ENCODE measurements at regions of chr5 and their contacts with region 1.

Region 1: GRCh38 chr5:132829742-132830435 is 558 bp downstream of the SHROOM1 start:
- DNase-seq: peak; percentile 81
- ATAC-seq: peak; percentile 88
- H3K4me3 Mint-ChIP-seq: peak overlapping the region; percentile 81
- H3K27ac Mint-ChIP-seq: peak overlapping the region; percentile 72
- H3K4me1 Mint-ChIP-seq: peaks cover 24% of the 10 kb centered on the region
- H3K27me3 Mint-ChIP-seq: peaks cover 31% of the 10 kb centered on the region

Region 2: GRCh38 chr5:132866342-132867045 is 36.6 kb after region 1 on chr5 and contains the starts of genes GDF9 and UQCRQ:
- CTCF ChIA-PET with region 1: interaction called, 25 read pairs
- POLR2A ChIA-PET with region 1: interaction called, 7 read pairs
- DNase-seq: peak; percentile 97
- ATAC-seq: peak; percentile 99
- H3K4me3 Mint-ChIP-seq: peak within 1 kb of the TSS; percentile 98
- H3K27ac Mint-ChIP-seq: peak within 1 kb of the TSS; percentile 99
- H3K4me1 Mint-ChIP-seq: peaks cover 23% of the 10 kb centered on the region
- H3K27me3 Mint-ChIP-seq: peaks cover 3% of the 10 kb centered on the region
- total RNA-seq, gene GDF9: 0.52 to 0.92 TPM
- total RNA-seq, gene UQCRQ: 381 to 396 TPM

Region 3: DNA sequence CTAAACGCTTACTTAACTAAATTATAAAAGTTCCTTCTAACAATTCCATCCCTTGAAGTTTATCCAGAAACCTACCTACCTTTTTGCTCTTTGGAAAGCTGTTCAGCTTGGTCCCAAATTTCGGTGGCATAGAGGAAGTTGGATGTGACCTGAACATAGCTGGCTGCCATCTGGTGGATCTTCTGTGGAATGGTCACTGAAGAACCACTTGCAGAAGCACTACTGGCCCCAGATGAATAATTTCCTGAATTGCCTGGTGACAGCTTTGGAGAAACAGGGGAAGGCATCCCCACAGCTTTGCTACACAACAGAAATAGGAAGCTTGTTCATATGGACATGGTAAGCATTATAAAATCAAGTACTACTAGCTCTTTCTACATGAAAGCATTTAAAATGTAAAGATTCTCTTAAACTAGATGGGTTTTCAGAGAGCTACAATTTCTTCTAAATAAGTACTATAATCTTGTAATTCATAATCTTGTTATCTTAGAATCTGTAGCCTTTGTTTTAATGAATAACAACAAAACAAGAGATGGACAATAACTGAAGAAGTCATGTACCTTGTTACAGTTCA is 53.5 kb after region 1 on chr5:
- CTCF ChIA-PET with region 1: interaction called, 35 read pairs
- POLR2A ChIA-PET with region 1: interaction called, 3 read pairs
- DNase-seq: peak; percentile 48
- ATAC-seq: peak; percentile 67
- H3K4me3 Mint-ChIP-seq: no peak overlapping the region
- H3K27ac Mint-ChIP-seq: no peak overlapping the region
- H3K4me1 Mint-ChIP-seq: no peaks in the 10 kb centered on the region
- H3K27me3 Mint-ChIP-seq: no peaks in the 10 kb centered on the region

Region 4: DNA sequence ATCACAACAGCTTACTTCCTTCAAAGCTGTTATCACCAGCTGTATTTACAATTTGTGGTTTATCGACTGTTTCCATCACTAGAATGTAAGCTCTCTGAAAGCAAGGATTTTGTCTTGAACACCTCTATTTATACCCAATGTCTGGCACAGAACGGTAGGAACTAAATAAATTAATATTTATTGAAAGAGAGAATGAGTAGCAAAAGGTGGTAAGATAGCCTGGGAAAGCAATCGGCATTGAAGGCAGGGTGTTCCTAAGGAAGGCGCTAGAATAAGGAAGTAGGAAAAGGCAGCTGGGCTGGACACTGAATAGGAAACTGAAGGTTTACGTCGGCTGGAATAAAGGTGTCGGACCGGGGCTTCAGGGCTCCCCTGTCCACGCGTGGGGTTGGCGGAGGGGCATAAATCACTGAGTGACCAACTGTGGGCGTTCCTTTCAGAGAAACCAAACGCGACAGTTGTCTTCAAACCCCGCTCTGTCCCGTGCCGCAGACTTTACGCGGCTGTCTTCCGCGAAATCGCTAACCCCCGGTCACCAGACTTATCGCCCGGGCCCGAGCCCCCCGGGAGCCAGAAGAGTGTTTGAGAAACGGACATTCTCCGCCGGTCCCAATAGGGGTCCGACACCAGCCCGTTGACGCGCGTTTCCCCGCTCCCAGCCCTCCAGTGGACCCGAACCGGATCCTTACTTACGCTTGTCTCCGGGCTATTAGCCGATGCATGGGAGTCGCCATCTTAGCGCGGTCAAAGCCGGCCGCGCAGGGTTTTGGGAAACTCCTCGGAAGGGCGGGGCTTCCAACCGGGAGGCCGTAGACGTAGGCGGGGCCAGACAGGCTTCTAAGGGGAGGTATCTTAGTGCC is 196.1 kb after region 1 on chr5 and contains the start of gene ZCCHC10:
- CTCF ChIA-PET with region 1: no interaction called
- POLR2A ChIA-PET with region 1: no interaction called
- DNase-seq: peak; percentile 94
- ATAC-seq: peak; percentile 99
- H3K4me3 Mint-ChIP-seq: peak within 1 kb of the TSS; percentile 88
- H3K27ac Mint-ChIP-seq: peak within 1 kb of the TSS; percentile 88
- H3K4me1 Mint-ChIP-seq: peaks cover 18% of the 10 kb centered on the region
- H3K27me3 Mint-ChIP-seq: peaks cover 1% of the 10 kb centered on the region
- total RNA-seq, gene ZCCHC10: 27.2 to 29.5 TPM